ENCODE measurements at regions of chr6 and their contacts with region 1.

Region 1: DNA sequence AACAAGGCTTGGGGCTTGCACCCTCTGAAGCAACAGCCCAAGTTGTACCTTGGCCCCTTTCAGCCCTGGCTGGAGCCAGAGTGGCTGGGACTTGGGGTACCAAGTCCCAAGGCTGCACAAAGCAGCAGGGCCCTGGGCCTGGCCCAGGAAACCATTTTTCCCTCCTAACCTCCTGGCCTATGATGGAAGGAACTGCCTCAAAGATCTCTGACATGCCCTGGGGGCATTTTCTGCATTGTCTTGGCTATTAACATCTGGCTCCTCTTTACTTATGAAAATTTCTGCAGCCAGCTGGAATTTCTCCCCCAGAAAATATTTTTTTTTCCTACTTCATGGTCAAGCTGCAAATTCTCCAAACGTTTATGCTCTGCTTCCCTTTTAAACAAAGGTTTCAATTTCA is 269.4 kb upstream of the CDYL start:
- DNase-seq: no peak
- H3K4me3 ChIP-seq: no peak overlapping the region
- H3K27ac ChIP-seq: no peak overlapping the region
- H3K4me1 ChIP-seq: no peaks in the 10 kb centered on the region
- H3K27me3 ChIP-seq: peaks cover 6 to 7% of the 10 kb centered on the region in 2 experiments
- CTCF ChIP-seq: no peak
- POLR2A ChIP-seq: no peak

Region 2: GRCh38 chr6:3977875-3978711 is 528.7 kb before region 1 on chr6:
- CTCF ChIA-PET with region 1: no interaction called
- POLR2A ChIA-PET with region 1: no interaction called
- dilution Hi-C with region 1: no loop called
- intact Hi-C with region 1: no loop called
- DNase-seq: peak; percentile 90
- H3K4me3 ChIP-seq: no peak overlapping the region
- H3K27ac ChIP-seq: no peak overlapping the region
- H3K4me1 ChIP-seq: peaks cover 6% of the 10 kb centered on the region
- H3K27me3 ChIP-seq: no peaks in the 10 kb centered on the region
- CTCF ChIP-seq: peak; percentile 66 to 93
- POLR2A ChIP-seq: no peak

Region 3: GRCh38 chr6:4388675-4389074 is 118.1 kb before region 1 on chr6:
- CTCF ChIA-PET with region 1: no interaction called
- POLR2A ChIA-PET with region 1: no interaction called
- dilution Hi-C with region 1: no loop called
- intact Hi-C with region 1: loop called (anchors 5 kb)
- DNase-seq: no peak
- H3K4me3 ChIP-seq: no peak overlapping the region
- H3K27ac ChIP-seq: no peak overlapping the region
- H3K4me1 ChIP-seq: no peaks in the 10 kb centered on the region
- H3K27me3 ChIP-seq: no peaks in the 10 kb centered on the region
- CTCF ChIP-seq: no peak
- POLR2A ChIP-seq: no peak

Region 4: DNA sequence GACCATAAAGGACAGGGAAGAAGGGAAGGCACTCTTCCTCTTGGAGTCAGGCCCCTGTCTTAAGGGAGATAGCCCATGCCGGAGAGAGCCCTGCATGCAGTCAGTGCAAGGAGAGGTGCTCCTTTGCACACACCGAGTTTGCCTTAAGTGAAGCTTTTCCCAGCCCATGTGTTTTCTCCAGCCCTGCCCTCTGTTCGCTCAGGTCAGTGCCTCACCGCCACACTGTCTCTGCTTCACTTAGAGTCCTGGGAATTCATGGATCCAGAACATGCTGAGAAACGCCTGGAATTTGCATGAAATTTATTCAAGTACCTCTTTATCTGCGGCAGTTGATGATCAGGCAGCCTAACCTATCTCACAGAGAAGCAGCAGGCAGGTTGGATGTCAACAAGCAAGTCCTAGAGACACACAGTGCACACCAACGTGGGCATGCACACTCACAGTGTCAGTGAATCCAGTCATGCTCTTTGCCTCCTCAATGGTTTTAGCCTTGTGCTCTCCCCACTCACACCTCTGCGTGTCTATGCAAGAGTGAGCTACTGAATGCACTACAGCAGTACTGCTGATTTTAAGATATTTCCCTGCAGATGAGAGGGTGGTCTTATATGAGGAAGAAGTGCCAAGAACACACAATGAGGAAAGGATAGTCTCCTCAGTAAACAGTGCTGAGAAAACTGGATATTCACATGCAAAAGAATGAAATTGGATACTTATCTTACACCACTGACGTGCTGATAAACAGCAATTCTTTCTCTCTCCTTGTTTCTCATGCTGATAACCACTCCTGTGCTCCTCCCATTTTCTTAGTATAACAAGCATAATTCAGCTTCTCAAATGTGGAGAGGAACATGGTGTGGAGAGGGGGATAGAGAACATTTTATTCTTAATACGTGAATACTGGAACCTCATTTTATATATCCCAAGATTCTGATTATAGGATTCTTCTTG is 25.7 kb before region 1 on chr6:
- CTCF ChIA-PET with region 1: no interaction called
- POLR2A ChIA-PET with region 1: no interaction called
- dilution Hi-C with region 1: no loop called
- intact Hi-C with region 1: no loop called
- DNase-seq: no peak
- H3K4me3 ChIP-seq: no peak overlapping the region
- H3K27ac ChIP-seq: no peak overlapping the region
- H3K4me1 ChIP-seq: no peaks in the 10 kb centered on the region
- H3K27me3 ChIP-seq: peaks cover 5% of the 10 kb centered on the region in 2 experiments
- CTCF ChIP-seq: no peak
- POLR2A ChIP-seq: no peak

Region 5: DNA sequence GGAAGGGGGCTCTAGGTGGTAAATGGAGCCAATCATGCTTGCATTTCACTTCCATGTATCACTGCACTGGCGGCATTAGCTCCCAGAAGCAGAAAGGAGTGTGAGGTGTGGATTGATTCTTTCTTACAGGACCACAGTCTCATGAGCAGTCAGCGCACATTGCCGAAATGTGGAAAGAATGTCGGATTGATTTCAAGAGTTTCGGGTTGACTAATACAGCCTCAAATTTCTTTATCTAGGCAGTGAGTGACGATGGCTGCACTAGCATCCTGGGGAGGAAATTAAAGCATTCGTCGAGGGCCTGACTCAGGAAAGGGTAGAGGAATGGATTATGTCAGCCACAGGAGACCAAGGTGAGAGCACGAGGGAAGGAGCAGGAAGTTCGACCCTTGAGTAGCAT is 46.6 kb after region 1 on chr6:
- CTCF ChIA-PET with region 1: no interaction called
- POLR2A ChIA-PET with region 1: no interaction called
- dilution Hi-C with region 1: no loop called
- intact Hi-C with region 1: no loop called
- DNase-seq: no peak
- H3K4me3 ChIP-seq: no peak overlapping the region
- H3K27ac ChIP-seq: no peak overlapping the region
- H3K4me1 ChIP-seq: no peaks in the 10 kb centered on the region
- H3K27me3 ChIP-seq: peaks cover 2 to 4% of the 10 kb centered on the region in 2 experiments
- CTCF ChIP-seq: no peak
- POLR2A ChIP-seq: no peak

Region 6: DNA sequence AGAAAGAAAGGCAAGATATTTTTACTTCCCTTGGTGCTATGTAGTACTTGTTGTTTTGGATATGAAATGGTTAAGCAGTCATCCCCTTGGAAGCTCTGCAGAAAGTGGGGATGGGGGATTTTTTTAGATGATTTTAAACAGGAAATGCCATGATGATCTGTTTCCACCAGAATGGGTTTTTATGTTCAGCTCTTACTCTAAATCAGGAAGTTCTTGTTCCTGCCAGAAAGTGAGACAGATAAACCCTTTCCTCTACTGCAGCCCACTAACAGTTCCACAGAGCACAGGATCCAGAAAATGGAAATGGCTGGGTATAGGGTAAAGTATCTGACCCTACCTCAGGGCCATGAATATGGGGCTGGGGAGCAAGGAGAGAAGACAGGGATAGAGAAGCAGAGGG is 546.3 kb after region 1 on chr6:
- CTCF ChIA-PET with region 1: no interaction called
- POLR2A ChIA-PET with region 1: no interaction called
- dilution Hi-C with region 1: no loop called
- intact Hi-C with region 1: no loop called
- DNase-seq: peak; percentile 71
- H3K4me3 ChIP-seq: no peak overlapping the region
- H3K27ac ChIP-seq: peak overlapping the region; percentile 45
- H3K4me1 ChIP-seq: peaks cover 27% of the 10 kb centered on the region
- H3K27me3 ChIP-seq: no peaks in the 10 kb centered on the region
- CTCF ChIP-seq: no peak
- POLR2A ChIP-seq: no peak